Posterior vena cava (tissue), 2 donors: ENCODE measurements at regions of chr20 and their contacts with region 1.

Region 1: DNA sequence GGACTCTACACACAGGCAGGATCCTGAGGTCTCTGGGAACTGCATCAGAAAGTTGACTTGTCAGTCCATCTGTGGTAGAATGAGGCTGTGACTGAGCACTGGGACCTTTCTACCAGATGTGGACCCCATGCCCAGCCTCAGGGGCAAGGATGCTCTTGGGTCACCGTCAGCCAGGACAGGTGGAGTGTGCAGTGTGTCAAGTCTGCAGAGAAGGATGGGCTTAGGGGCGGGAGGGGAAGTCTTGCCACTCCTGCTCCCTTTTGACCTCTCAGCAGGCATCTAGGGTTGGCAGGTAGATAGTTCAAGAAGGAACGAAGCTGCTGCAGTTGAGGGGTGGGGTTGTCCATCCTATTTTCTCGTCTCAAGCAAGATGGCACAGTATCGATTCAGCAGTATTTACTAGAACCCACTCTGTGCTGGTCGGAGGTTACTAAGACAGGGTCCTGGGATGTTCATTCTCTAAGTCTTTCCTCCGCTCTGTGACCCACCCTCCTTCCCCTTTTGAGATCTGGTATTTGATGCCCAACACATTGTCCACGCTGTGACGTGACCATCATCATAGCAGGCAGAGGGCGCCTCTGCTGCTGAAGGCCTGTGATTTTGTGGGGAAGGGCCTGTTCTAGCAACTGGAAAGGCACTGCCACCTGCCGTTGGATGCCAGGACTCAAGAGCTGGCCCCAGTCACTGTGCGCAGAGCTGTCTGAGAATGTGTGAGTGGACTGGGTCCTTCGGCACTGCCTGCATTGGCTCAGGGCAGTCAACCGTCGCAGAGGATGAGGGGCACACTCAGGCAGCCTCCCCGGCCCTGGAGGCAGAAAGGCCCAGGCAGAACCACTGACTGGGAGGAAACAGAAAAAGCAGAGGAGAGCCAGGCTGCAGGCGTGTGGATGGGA is 23.2 kb downstream of the RBCK1 start:
- DNase-seq: no peak

Region 2: GRCh38 chr20:208942-209566 is 222.2 kb before region 1 on chr20:
- intact Hi-C with region 1: loop called in 1 of 2 experiments (anchors 10 kb)
- DNase-seq: no peak

Region 3: DNA sequence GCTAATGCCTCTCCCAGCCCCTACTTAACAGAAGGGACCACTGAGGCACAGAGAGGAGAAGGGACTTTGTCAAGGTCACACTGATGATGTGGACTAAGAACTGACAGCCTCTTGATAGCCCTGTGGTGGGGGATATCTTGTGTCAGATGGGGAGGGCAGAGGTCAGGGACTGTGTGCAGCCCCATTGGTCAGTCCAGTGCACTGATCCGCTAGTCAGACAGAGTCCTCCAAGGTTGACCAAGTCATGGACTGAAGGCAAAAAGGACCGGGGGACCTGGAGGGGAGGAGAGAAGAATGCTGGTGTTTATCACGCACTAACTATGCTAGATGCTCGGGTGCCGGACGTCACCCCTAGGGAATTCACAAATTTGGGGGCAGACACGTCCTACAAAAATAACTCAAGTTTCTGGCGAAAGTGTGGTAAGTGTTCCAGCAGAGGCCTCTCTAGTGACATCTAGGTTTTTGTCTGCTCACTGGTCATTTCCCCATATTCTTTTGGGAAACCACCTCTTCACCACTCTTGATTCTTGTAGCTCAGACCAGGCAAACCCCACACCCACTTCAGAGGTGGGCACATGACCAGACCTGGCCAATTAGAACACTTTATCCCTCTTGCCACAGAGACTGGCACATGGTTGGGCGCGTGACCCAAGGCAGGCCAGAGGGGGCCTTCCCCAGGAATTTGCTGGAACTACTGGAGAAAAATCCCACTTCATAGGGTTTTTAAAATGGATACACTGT is 157.8 kb after region 1 on chr20:
- intact Hi-C with region 1: no loop called
- DNase-seq: peak; percentile 38